Activated CD8-positive, alpha-beta memory T cell treated with anti-CD3 and anti-CD28 coated beads, Interleukin-2, amount 10 ng/mL, durations not matched to agents 7 days and 5 days (primary cell): ENCODE measurements at regions of chr6 and their contacts with region 1.

Region 1: DNA sequence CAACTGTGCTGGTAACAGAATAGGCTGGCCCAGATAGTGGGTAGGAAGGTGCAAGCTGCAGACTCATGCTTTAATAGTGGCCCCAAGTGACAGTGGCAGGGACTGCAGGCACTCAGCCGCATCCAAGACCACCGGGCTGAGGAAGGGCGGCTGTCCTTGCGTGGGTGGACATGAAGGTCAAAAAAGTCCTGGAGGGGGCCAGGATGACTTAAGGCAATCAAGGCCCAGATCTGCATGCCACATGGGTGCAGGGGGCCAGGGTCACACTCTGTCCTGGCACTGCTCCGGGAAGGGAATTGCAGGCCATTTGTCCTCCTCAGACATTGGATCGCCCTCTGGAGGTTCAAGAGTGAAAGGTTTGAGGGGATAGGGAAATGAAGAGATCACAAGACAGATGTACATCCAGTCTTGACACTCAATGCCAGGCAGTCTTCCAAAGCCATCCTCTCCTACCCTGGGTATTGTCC is 10.4 kb upstream of the VNN2 start:
- DNase-seq: peak; percentile 60
- ATAC-seq: peak; percentile 75
- H3K4me3 Mint-ChIP-seq: no peak overlapping the region
- H3K27ac Mint-ChIP-seq: no peak overlapping the region
- H3K4me1 Mint-ChIP-seq: peaks cover 19% of the 10 kb centered on the region
- H3K27me3 Mint-ChIP-seq: no peaks in the 10 kb centered on the region

Region 2: GRCh38 chr6:132669690-132670291 is 98.3 kb before region 1 on chr6:
- CTCF ChIA-PET with region 1: interaction called, 91 read pairs
- DNase-seq: no peak
- ATAC-seq: peak; percentile 78
- H3K4me3 Mint-ChIP-seq: peak overlapping the region; percentile 29
- H3K27ac Mint-ChIP-seq: no peak overlapping the region
- H3K4me1 Mint-ChIP-seq: peaks cover 21% of the 10 kb centered on the region
- H3K27me3 Mint-ChIP-seq: peaks cover 11% of the 10 kb centered on the region